Panc1 (cell line): ENCODE measurements at regions of chr2 and their contacts with region 1.

Region 1: DNA sequence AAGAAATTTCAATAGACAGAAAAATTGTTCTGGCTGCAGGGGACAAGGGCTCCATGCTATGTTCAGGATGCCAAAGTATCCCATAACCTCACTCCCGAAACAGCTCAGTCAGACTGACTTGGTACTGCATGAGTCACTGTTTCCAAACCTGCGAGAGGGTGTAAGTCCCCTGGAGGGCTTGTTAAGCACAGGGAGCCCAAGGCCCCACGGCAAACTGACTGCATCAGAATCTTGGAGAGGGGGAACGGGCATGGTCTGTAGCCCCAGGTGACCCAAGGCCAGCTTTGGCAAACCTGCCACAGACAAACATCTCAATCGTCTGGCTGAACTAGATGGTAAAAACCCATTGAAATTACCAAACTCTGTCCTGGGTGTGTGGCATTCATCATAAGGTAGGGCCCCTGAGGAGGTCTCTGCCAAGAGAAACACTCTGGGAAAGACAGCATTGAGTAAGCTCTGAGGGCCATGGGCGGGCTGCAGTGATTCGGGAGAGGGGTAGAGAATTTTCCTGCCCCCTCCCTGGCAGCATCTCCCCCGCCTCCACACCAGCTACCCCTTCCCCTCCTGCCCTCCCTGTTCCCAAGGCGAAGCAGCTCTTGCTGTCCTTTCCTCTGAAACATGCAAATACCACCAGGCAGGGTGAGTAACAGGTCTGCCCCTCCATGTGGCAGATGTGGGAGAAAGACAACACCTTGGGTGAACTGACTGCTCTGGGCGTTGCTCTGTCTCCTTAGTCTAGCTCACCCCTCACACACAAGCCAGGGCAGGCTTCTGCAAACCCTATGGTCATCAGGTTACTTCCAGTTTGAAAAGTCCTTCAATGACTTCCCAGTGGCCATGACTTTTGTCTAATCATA is 274.7 kb upstream of the SIX2 start:
- DNase-seq: peak; percentile 52
- ATAC-seq: peak; percentile 63; the same call in 1 of the 2 replicates
- H3K4me3 ChIP-seq: no peak overlapping the region
- H3K27ac ChIP-seq: no peak overlapping the region
- H3K4me1 ChIP-seq: no peaks in the 10 kb centered on the region
- H3K27me3 ChIP-seq: no peaks in the 10 kb centered on the region; the same call in 1 of the 2 replicates
- CTCF ChIP-seq: no peak

Region 2: DNA sequence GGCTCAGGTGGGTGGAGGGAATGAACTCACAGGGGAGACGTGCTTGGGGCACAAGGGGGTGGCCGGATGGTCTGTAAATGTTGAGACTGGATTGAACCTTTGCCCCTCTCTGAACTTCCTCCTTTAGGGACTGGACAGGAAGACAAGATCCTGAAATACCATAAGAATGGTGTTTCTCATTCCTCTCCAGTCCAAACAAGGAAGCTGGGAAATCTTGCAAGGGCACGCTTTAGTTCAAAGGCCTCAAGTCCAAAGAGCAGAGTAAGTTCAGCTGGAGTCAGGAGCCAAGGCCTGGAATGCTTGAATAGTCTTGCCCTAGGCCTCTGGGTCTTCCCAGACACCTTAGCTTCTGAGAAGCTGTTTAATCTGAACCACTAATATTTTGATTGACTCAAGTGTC is 394.9 kb before region 1 on chr2:
- CTCF ChIA-PET with region 1: no interaction called
- POLR2A ChIA-PET with region 1: interaction called, 11 read pairs
- in situ Hi-C with region 1: no loop called
- intact Hi-C with region 1: no loop called
- DNase-seq: no peak
- ATAC-seq: no peak
- H3K4me3 ChIP-seq: no peak overlapping the region
- H3K27ac ChIP-seq: no peak overlapping the region
- H3K4me1 ChIP-seq: no peaks in the 10 kb centered on the region
- H3K27me3 ChIP-seq: peaks cover 8% of the 10 kb centered on the region
- CTCF ChIP-seq: no peak